AG04449 (cell line): ENCODE measurements at regions of chr20 and their contacts with region 1.

Region 1: GRCh38 chr20:36835453-36836198 is 40.3 kb upstream of the TLDC2 start:
- DNase-seq: peak; percentile 63
- H3K4me3 ChIP-seq: peak overlapping the region; percentile 27
- CTCF ChIP-seq: no peak

Region 2: DNA sequence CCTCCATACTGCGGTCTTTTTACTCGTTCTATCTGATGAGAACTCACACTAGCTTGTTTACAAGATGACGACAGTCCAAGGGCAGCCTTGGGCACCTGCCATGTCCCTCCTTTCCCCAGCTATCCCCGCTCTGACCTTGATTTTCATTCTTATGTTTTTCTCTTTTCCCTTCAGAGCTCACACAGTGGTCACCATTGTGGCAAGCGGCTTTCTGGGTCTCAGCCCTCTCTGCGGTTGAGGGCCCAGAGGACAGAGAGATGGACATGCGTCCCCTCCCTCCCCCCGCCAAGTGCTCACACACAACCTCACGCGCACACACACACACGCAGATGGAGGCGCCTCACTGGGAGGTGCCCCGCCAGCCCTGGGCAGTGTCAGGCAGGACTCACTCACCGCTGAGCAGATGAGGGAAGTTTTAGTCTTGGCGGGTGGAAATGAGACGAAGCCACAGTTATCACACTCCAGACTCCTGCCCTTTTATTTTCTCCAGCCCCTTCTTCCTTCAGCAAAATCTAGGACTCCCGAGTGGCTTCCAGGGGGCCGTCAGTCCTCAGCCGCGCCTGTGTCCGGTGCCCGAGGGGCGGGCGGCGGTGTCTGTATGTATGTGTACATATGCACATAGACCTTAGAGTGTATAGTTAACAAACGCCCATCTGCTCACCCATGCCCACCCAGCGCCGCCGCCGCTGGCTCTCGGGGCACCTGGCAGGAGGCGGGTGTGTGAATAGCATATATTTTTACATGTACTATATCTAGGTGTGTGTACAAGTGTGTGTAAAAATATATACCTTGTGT is 308.1 kb before region 1 on chr20:
- CTCF ChIA-PET with region 1: no interaction called
- POLR2A ChIA-PET with region 1: no interaction called
- DNase-seq: no peak
- H3K4me3 ChIP-seq: no peak overlapping the region
- CTCF ChIP-seq: no peak

Region 3: DNA sequence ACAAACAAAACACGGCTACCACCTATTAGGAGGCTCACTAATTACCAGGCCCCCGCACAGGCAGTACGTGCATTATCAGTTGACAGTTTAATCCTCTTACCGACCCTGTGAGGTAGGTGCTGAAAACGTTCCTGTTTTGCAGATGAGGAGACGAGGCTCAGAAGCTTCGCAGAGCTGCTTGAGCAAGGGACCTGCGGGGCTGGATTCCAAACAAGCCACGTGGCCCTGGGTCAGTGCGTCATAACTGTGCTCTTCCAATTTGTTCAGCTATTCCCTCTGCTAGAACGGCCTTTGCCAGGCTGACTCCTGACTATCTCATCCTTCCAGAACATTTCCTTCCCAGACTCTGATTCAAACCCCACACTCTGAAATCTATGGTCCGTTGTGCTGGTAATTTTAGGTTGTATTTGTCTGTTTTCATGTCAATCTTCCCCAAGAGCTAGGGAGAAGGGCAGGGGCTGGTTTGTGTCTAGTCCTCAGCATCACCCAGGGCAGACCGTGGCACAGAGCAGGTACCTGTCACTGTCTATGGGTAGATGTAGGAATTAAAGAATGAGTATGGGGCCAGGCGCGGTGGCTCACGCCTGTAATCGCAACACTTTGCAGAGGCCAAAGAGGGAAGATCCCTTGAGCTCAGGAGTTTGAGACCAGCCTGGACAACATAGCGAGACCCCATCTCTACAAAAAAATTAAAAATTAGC is 11.5 kb after region 1 on chr20:
- CTCF ChIA-PET with region 1: interaction called, 11 read pairs
- POLR2A ChIA-PET with region 1: interaction called, 7 read pairs
- DNase-seq: no peak
- H3K4me3 ChIP-seq: no peak overlapping the region
- CTCF ChIP-seq: no peak

Region 4: GRCh38 chr20:36856691-36857635 is 21.3 kb after region 1 on chr20:
- CTCF ChIA-PET with region 1: interaction called, 40 read pairs
- POLR2A ChIA-PET with region 1: interaction called, 3 read pairs
- DNase-seq: no peak
- H3K4me3 ChIP-seq: no peak overlapping the region
- CTCF ChIP-seq: no peak

Region 5: DNA sequence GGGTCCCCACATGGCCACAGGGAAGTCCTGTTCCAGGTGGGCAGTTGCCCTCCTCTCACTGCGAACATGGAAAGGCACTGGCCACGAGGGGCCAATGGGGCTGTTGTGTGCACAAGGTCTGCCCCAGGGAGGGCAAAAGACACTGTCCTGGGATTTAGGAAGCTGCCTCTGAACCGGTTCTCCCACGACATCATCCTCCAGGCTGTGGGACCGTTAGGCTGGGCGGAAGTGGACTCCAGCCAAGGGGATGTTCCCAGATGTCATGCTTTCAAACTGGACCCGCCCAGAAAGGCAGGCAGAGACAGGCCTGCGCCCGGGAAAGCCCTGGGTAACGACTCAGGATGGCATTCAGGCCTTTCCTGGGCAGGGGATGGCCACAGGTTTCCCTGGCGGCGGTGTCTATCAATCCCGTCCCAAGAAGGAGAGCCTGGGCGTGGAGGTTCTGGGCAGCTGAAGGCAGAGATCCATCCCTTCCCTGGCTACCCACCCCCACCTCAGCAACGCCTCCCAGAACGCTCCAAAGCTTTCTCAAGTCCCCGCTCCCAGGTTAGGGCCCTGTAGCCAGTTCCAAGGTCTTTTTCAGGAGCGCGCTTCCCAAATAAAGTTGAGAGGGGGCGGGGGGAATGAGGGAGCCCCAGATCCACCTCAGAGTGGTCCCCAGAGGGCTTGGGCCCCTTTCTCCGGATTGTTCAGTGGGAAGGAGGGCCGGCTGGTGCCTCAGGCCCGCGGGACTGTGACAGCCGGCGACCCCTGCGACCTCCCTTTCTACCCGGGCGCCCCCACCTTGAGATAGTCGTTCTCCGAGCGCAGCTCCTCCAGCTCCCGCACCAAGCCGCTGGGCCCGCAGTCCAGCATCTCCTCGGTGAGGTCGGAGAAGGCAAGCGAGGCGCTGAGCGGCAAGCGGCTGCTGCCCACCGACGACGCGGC is 26.5 kb after region 1 on chr20:
- CTCF ChIA-PET with region 1: interaction called, 40 read pairs
- POLR2A ChIA-PET with region 1: interaction called, 3 read pairs
- DNase-seq: no peak
- H3K4me3 ChIP-seq: peak overlapping the region; percentile 69
- CTCF ChIP-seq: no peak